Caco-2 (cell line): ENCODE measurements at regions of chr22 and their contacts with region 1.

Region 1: DNA sequence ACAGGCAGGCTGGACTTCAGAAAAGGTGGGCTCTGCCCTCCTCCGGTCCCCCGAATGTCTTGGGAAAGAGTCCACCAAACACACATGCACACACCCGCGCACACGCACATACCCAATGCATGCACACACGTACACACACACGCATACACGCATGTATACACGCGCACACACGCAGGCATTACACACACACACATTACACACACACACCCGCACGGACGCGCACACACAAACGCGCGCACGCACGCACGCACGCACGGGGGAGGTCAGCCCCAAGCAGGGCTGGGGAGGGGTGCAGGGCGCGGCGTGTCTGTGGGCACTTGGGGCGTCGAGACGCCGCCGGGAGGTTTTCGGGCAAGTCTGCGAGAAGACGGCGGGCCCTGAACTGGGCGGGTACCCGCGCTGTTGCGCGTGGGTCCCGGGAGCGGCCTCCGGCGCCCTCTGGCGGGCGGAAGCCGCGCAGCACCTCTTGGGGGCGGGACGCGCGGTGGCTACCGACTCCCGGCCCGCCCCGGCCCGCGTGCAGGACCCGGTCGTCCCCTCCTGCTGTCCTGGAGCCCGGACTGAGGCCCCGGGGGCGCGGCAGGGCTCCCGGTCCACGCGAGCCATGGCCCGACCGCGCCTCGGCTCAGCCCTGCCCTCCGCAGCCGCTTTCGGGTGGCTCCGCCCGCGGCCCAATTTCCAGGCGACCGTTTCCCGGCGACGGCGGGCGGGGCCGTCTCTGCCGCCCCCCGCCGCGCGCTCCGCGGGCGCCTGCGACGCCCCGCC is 3.6 kb downstream of the SEPTIN5 start:
- DNase-seq: peak in 1 of 2 experiments; percentile 85
- H3K4me3 ChIP-seq: peak overlapping the region; percentile 56
- H3K4me3 Mint-ChIP-seq: peak overlapping the region; percentile 70
- H3K27ac Mint-ChIP-seq: no peak overlapping the region
- H3K4me1 ChIP-seq: peaks cover 7% of the 10 kb centered on the region
- H3K4me1 Mint-ChIP-seq: no peaks in the 10 kb centered on the region
- H3K27me3 ChIP-seq: no peaks in the 10 kb centered on the region
- H3K27me3 Mint-ChIP-seq: no peaks in the 10 kb centered on the region
- CTCF ChIP-seq: peak; percentile 81 to 93

Region 2: DNA sequence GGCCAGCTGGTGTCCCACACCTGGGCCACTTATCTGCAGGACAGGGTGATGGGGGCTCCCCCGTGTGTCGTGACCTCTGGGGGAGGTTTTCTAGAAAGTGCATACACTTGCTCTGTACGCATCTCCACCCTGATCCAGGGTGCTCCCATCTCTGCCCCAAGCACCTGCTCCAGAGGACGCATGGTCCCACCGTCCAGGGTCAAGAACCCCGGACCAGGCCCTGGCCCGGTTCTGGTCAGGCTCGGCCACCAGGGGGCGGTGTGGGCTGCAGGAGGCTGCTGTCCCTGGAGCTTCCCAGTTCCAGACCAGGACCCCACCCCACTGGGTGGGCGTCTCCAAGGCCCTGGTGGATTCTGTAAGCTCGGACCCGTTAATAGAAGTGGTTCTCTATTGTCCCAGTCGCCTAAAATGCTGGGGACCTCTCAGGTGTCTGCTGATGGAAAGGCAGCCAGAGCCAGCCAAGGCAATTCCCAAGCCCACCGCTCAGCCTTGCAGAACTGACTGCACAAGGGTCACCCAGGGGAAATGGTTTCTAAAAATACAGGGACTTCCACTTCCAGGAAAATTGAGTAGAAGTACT is 38.3 kb before region 1 on chr22:
- CTCF ChIA-PET with region 1: no interaction called
- POLR2A ChIA-PET with region 1: no interaction called
- intact Hi-C with region 1: loop called (anchors 5 kb)
- DNase-seq: peak in 1 of 2 experiments; percentile 62
- H3K4me3 ChIP-seq: no peak overlapping the region
- H3K4me3 Mint-ChIP-seq: no peak overlapping the region
- H3K27ac Mint-ChIP-seq: no peak overlapping the region
- H3K4me1 ChIP-seq: no peaks in the 10 kb centered on the region
- H3K4me1 Mint-ChIP-seq: no peaks in the 10 kb centered on the region
- H3K27me3 ChIP-seq: no peaks in the 10 kb centered on the region
- H3K27me3 Mint-ChIP-seq: peaks cover 8% of the 10 kb centered on the region
- CTCF ChIP-seq: peak; percentile 70 to 76